ENCODE measurements at regions of chr14 and their contacts with region 1.

Region 1: GRCh38 chr14:68663385-68664076 is 129.3 kb downstream of the ZFP36L1 start:
- DNase-seq: peak; percentile 24
- H3K4me3 Mint-ChIP-seq: peak overlapping the region; percentile 34
- H3K27ac Mint-ChIP-seq: peak overlapping the region; percentile 80
- H3K4me1 Mint-ChIP-seq: peaks cover 53% of the 10 kb centered on the region
- H3K27me3 Mint-ChIP-seq: no peaks in the 10 kb centered on the region

Region 2: DNA sequence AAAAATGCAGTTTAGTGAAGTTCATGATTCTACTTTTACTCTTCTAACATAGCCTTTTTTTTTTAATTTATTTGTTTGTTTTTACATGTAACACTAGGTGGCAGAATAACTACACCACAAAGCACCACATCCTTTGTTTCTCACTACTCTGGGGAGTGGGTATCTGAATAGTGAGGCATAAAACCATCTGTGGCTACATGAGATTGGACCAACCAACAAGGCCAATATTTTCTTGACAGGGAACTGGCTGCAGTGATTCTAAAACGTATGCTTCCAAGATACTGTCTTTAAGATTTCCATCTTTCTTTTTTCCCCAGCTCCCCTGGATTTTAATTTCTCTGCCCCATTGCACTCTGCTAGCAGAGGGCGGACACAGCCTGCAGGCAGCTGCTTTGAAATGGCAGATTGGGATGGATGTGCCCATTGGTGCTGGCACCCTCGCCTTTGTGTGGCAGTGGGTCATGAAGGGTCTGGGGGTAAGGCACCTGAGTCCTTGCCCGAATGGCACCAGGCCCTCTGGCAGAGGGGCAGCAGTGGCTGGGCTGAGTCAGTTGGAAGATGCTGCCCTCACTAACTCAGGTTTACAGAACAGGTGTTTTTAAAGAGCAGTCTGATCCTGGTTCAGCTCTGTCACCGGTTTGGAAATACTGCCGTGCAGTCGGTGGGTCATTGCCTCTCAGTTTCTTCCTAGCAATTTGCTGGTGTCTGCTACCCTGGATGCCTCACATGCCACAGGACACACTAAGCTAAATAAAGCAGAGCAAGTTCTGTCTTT is 414.9 kb before region 1 on chr14:
- intact Hi-C with region 1: loop called (anchors 1 kb)
- DNase-seq: no peak
- H3K4me3 Mint-ChIP-seq: no peak overlapping the region
- H3K27ac Mint-ChIP-seq: no peak overlapping the region
- H3K4me1 Mint-ChIP-seq: peaks cover 25% of the 10 kb centered on the region
- H3K27me3 Mint-ChIP-seq: no peaks in the 10 kb centered on the region

Region 3: DNA sequence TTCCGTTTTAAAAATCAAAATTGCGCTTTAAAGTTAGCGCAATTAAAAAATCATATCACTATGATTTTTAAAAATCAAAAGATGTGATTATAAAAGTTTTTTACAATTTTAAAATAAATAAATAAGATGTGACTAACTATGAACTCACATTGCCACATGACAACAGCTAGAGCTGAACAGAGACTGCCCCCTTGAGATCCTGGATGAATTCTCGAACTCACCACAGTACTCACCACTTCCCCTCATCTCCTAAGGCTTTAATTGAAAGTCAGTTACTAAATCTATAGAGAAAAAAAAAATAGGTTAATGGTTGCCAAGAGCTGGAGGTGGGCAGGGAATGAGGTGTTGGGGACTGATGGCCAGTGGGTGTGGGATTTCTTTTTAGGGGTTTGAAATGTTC is 254.9 kb before region 1 on chr14:
- intact Hi-C with region 1: loop called (anchors 10 kb)
- DNase-seq: no peak
- H3K4me3 Mint-ChIP-seq: no peak overlapping the region
- H3K27ac Mint-ChIP-seq: no peak overlapping the region
- H3K4me1 Mint-ChIP-seq: peaks cover 19% of the 10 kb centered on the region
- H3K27me3 Mint-ChIP-seq: no peaks in the 10 kb centered on the region

Region 4: GRCh38 chr14:68482772-68483395 is 180.6 kb before region 1 on chr14:
- intact Hi-C with region 1: loop called (anchors 1 kb)
- DNase-seq: no peak
- H3K4me3 Mint-ChIP-seq: no peak overlapping the region
- H3K27ac Mint-ChIP-seq: no peak overlapping the region
- H3K4me1 Mint-ChIP-seq: peaks cover 34% of the 10 kb centered on the region
- H3K27me3 Mint-ChIP-seq: no peaks in the 10 kb centered on the region

Region 5: DNA sequence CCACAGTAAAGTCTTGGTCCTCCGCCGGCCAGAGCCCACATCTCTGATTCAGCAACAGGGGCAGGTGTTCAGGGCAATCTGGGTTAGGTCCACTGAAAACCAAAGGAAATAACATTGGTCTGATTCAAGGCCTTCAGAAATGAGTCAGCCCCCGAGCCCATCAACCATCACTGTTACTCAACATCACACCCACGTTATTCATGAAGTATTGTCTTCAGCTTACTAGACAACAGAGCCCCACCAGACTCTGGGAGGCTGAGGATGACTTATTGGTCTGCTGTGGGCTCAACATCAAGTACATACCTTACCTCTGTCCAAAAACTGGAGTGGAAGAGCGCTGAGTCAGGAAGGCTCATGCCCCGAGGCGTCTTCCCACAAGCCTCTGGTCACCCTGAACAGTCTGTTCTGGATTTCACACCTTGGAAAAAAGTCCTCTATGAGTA is 31.8 kb after region 1 on chr14:
- intact Hi-C with region 1: loop called (anchors 1 kb)
- DNase-seq: no peak
- H3K4me3 Mint-ChIP-seq: no peak overlapping the region
- H3K27ac Mint-ChIP-seq: peak overlapping the region; percentile 18
- H3K4me1 Mint-ChIP-seq: peaks cover 21% of the 10 kb centered on the region
- H3K27me3 Mint-ChIP-seq: peaks cover 2% of the 10 kb centered on the region

Region 6: DNA sequence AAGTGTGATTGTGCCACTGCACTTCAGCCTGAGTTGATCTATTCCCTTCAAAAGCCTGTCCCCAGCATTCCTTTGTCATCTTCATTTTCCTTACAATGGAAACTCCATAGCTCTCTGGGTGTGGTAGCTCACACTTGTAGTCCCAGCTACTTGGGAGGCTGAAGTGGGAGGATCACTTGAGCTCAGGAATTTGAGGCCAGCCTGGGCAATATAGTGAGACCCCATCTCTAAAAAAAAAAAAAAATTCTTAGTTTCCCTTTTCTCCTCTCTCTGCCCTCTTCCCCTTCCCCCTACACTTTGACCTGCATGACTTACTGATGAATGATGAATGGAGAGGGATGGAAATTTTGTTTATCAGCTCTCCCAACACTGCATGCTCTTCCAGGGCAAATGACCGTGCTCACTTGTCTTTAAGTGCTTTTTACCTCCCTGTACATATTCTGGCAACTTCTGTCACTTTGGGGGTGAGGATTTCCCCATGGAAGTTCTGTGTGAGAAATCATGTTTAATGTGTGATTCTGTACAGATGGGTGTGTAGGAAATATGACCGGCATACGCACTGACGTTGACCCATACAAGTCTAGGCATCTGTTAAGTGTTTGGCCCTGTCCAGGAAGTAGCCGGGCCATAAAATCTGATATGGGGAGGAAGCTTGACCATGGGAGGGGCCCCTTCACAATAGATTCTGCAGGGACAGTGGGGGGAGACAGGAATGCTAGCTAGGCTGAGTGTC is 64.0 kb after region 1 on chr14:
- intact Hi-C with region 1: loop called (anchors 2 kb)
- DNase-seq: no peak
- H3K4me3 Mint-ChIP-seq: no peak overlapping the region
- H3K27ac Mint-ChIP-seq: no peak overlapping the region
- H3K4me1 Mint-ChIP-seq: peaks cover 40% of the 10 kb centered on the region
- H3K27me3 Mint-ChIP-seq: no peaks in the 10 kb centered on the region

Region 7: GRCh38 chr14:68780358-68781160 is 117.0 kb after region 1 on chr14:
- intact Hi-C with region 1: loop called (anchors 1 kb)
- DNase-seq: no peak
- H3K4me3 Mint-ChIP-seq: peak overlapping the region; percentile 67
- H3K27ac Mint-ChIP-seq: peak overlapping the region; percentile 92
- H3K4me1 Mint-ChIP-seq: peaks cover 63% of the 10 kb centered on the region
- H3K27me3 Mint-ChIP-seq: no peaks in the 10 kb centered on the region